WTC11 (cell line): ENCODE measurements at regions of chr11 and their contacts with region 1.

Region 1: GRCh38 chr11:95231127-95231880 is at the start of gene SESN3:
- DNase-seq: peak; percentile 99
- ATAC-seq: peak; percentile 94
- H3K4me3 Mint-ChIP-seq: peak within 1 kb of the TSS; percentile 97
- H3K27ac Mint-ChIP-seq: peak within 1 kb of the TSS; percentile 43
- H3K4me1 Mint-ChIP-seq: peaks cover 51% of the 10 kb centered on the region
- H3K27me3 Mint-ChIP-seq: peaks cover 30% of the 10 kb centered on the region
- CTCF ChIP-seq: no peak
- total RNA-seq, gene SESN3: 34.9 to 38.2 TPM (median 35.1 TPM) in 3 replicates

Region 2: GRCh38 chr11:95156916-95157541 is 74.3 kb before region 1 on chr11:
- CTCF ChIA-PET with region 1: interaction called, 33 read pairs
- POLR2A ChIA-PET with region 1: interaction called, 5 read pairs
- DNase-seq: no peak
- ATAC-seq: no peak
- H3K4me3 Mint-ChIP-seq: no peak overlapping the region
- H3K27ac Mint-ChIP-seq: no peak overlapping the region
- H3K4me1 Mint-ChIP-seq: peaks cover 16% of the 10 kb centered on the region
- H3K27me3 Mint-ChIP-seq: peaks cover 1% of the 10 kb centered on the region; the same call in 1 of the 2 replicates
- CTCF ChIP-seq: no peak

Region 3: DNA sequence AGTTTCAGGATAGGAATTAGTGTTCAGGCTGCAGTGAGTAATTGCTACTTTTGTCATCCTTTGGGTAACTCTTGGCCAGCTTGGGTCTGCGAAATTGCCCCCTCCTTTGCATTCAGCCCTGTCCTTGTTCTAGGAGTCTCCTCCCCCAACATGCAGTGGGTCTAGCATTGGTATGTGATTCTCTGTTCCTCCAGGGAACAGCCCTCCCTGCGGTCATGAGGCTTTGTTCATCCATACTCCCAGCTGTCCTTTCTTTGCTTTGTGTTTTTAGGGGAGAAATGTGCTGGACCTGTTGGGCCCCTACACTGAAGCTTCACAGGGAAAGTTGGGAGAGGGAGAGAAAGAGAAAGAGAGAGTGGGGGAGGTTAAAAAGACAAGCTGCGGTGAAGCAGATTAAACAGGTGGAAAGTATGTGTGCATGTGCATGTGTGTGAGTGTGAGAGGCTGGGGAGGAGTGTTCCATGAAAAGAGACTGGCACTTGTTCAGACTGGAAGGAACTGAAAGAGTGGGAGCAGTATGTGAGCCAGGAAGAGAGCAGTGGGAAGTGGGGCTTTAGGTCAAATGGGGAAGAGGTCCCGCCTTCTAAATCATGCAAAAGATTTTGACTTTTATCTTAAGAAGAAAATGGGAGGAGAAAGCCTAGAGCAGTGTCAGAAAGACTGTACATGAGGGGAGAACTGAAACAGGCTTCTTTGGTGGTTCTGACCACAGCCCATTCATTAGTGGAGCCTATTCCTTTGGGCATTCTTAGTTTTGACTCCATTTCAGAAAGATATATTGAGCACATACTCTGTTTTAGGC is 17.6 kb after region 1 on chr11:
- CTCF ChIA-PET with region 1: interaction called, 6 read pairs
- POLR2A ChIA-PET with region 1: interaction called, 12 read pairs
- DNase-seq: peak; percentile 31
- ATAC-seq: peak; percentile 92
- H3K4me3 Mint-ChIP-seq: no peak overlapping the region
- H3K27ac Mint-ChIP-seq: peak overlapping the region; percentile 43
- H3K4me1 Mint-ChIP-seq: peaks cover 57% of the 10 kb centered on the region
- H3K27me3 Mint-ChIP-seq: no peaks in the 10 kb centered on the region
- CTCF ChIP-seq: no peak

Region 4: DNA sequence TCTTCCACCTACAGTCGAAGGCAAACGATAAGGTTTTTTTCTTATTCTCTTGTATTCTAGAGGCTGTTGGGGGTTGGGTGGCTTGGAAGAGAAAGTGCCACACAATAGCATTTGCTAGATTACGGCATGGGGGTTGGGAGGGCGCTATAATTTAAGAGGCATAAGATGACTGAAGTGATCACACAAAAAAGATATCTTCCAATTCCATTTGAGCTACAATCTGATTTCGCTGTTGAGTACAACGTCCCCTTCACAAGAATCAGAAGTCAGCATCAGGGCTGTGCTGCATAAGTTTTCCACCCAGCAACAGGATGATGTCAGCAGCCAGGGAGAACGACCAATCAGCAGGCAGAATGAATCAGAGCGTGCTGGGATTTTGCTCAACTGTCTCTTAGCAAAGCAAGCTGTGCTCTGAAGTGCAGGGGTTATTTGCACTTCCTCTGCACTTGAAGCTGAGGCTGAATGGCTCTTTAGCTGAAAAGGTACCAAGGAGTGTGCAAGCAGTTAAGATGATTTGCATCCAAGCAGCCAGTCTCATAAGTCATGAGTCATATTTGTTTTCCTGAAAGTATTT is 22.9 kb after region 1 on chr11:
- CTCF ChIA-PET with region 1: interaction called, 8 read pairs
- POLR2A ChIA-PET with region 1: interaction called, 12 read pairs
- DNase-seq: peak; percentile 48
- ATAC-seq: peak; percentile 80
- H3K4me3 Mint-ChIP-seq: 0 out of 2 replicates have a peak overlapping the region, but pooled peaks have one; percentile 5
- H3K27ac Mint-ChIP-seq: peak overlapping the region; percentile 77
- H3K4me1 Mint-ChIP-seq: peaks cover 67% of the 10 kb centered on the region
- H3K27me3 Mint-ChIP-seq: no peaks in the 10 kb centered on the region
- CTCF ChIP-seq: no peak